ENCODE measurements at regions of chr6 and their contacts with region 1.

Region 1: DNA sequence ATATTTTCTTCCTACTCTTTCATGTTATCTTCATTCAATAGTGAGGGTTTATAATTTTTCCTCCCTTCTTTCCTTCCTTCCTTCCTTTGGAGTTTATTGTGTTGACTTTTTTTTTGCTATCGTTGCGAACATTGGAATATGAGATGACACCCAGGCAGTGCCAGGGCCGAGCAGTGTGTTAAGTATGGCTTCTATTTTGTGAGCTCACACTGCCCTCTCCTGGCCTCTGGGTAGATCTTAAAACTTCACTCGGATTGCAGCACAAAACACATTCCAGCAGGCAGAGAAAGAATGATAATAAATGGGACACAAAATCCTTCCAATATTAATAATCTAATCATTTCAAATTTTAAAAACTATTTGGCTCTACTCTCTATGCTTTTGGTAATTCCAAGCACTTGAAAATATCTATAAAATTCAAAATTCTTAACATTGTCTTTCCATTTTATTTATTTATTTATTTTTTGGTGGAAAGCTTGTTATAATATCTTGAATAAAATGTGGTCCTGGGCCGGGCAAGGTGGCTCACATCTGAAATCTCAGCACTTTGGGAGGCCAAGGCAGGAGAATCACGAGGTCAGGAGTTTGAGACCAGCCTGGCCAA is 147.4 kb upstream of the OLIG3 start:
- DNase-seq: peak; percentile 65
- ATAC-seq: peak; percentile 83
- H3K4me3 ChIP-seq: no peak overlapping the region
- H3K27ac ChIP-seq: no peak overlapping the region
- H3K4me1 ChIP-seq: no peaks in the 10 kb centered on the region
- H3K27me3 ChIP-seq: no peaks in the 10 kb centered on the region
- CTCF ChIP-seq: peak; percentile 75

Region 2: DNA sequence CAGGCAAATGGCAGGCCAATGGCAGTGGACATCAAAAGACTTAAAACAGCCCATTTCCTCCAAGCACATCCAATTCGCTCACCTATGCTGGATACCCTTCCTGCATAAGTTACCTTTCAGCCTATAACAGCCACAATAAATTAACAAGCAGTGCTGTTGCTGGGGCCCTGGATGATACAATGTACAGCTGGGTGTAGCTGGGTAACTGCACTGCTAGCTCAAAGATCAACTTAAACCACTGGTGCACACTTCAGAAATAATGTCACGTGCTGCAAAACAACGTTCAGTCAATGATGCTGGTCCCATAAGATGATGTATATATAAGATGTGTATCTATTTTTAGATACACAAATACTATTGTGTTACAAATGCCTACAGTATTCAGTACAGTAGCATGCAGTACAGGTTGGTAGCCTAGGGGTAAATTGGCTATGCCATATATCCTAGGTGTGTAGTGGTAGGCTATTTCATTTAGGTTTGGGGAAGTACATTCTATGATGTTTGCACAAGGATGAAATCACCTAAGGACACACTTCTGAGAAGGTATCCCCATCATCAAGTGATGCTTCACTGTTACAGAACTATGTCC is 610.4 kb before region 1 on chr6:
- CTCF ChIA-PET with region 1: interaction called, 13 read pairs
- POLR2A ChIA-PET with region 1: no interaction called
- intact Hi-C with region 1: no loop called
- DNase-seq: peak; percentile 19
- ATAC-seq: no peak
- H3K4me3 ChIP-seq: no peak overlapping the region
- H3K27ac ChIP-seq: no peak overlapping the region
- H3K4me1 ChIP-seq: peaks cover 34% of the 10 kb centered on the region
- H3K27me3 ChIP-seq: no peaks in the 10 kb centered on the region
- CTCF ChIP-seq: no peak

Region 3: GRCh38 chr6:137094411-137095008 is 547.1 kb before region 1 on chr6:
- CTCF ChIA-PET with region 1: no interaction called
- POLR2A ChIA-PET with region 1: no interaction called
- intact Hi-C with region 1: loop called (anchors 1 kb)
- DNase-seq: peak; percentile 83
- ATAC-seq: peak; percentile 81
- H3K4me3 ChIP-seq: no peak overlapping the region
- H3K27ac ChIP-seq: no peak overlapping the region
- H3K4me1 ChIP-seq: 0 out of 2 replicates have a peak, but pooled peaks cover 4% of the 10 kb centered on the region
- H3K27me3 ChIP-seq: no peaks in the 10 kb centered on the region
- CTCF ChIP-seq: peak; percentile 77

Region 4: GRCh38 chr6:137313928-137314855 is 327.4 kb before region 1 on chr6:
- CTCF ChIA-PET with region 1: no interaction called
- POLR2A ChIA-PET with region 1: no interaction called
- intact Hi-C with region 1: loop called (anchors 1 kb)
- DNase-seq: peak; percentile 67
- ATAC-seq: peak; percentile 71
- H3K4me3 ChIP-seq: no peak overlapping the region
- H3K27ac ChIP-seq: no peak overlapping the region
- H3K4me1 ChIP-seq: peaks cover 10% of the 10 kb centered on the region
- H3K27me3 ChIP-seq: no peaks in the 10 kb centered on the region
- CTCF ChIP-seq: peak; percentile 84